Cardiac septum (tissue), 1 donor: ENCODE measurements at regions of chr10 and their contacts with region 1.

Region 1: DNA sequence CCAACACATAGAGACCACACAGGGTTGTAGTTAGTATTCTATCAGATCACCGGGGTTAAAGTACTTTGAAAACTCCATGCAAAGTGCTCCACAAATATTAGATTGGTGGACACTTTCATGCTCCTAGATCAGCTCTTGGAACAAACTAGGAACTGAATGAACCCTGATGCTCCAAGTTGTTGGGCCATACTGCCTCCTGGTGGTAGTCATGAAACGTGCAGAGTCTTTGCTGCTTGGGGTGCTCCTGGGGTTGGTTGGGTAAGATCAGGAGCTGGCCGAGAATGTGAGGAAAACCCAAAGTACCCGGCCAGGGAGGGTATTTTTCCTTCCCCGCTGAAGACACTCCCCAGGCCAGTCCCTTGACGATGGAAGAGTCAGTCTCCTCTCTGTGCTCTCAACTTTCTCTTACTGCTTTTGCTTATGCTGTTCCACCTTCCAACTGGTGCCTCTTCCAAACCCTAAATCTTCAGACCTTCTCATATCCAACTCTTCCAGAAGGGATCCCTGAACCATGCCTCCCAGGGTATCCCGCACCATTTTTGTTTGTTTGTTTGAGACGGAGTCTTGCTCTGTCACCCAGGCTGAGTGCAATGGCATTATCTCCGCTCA is 920 bp upstream of the RPEL1 start:
- DNase-seq: peak; percentile 86

Region 2: GRCh38 chr10:102729029-102730026 is 515.4 kb before region 1 on chr10:
- intact Hi-C with region 1: loop called (anchors 10 kb)
- DNase-seq: peak; percentile 95

Region 3: DNA sequence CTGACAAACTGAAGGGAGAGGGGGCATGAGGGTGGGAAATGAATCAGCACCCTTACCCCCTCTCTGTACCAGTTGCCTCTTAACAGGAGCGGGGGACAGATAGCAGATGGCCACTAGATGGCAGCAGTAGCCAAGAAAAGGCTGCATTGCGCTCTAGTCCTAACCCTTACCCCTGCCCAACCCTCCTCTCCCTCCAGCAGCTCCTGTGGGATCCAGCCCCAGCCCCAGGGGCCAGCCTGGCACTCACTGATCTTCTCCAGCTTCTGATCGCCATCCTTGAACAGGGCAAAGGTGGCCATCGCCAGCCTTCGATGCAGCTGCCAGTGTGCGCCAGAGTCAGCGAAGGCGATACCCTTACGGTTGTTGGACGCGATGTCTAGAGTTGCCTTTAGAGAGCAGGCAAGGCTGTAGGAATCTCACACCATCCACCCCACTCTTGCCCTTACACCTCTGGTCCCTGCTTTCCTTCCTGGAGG is 409.7 kb before region 1 on chr10:
- intact Hi-C with region 1: loop called (anchors 5 kb)
- DNase-seq: peak; percentile 86

Region 4: GRCh38 chr10:102917962-102918816 is 326.6 kb before region 1 on chr10 and contains the start of gene CNNM2:
- intact Hi-C with region 1: loop called (anchors 2 kb)
- DNase-seq: peak; percentile 100
- total RNA-seq, gene CNNM2: 5.9 TPM

Region 5: GRCh38 chr10:103080891-103081581 is 163.7 kb before region 1 on chr10:
- intact Hi-C with region 1: loop called (anchors 5 kb)
- DNase-seq: no peak